MCF 10A (cell line): ENCODE measurements at regions of chr12 and their contacts with region 1.

Region 1: DNA sequence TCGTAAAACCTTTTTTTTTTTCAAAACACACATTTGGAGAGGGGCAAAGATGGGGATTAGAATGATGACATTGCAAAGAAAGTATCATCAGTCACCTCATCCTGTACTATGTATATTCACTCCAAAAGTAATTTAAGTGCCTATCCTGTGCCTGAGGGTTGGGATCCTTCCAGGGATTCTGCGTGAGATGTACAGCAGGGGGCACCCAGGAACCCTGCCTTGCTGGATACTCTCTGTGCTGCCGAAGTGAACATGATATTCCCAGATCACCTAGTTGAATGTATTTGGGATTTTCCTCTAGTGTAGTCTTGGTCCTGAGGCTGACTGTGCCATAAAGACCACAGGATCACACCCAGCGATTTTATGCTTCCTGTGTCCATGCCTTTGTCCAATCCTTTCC is 372.7 kb downstream of the IPO8 start:
- DNase-seq: peak; percentile 8
- H3K4me3 Mint-ChIP-seq: no peak overlapping the region
- H3K27ac Mint-ChIP-seq: no peak overlapping the region
- H3K4me1 Mint-ChIP-seq: no peaks in the 10 kb centered on the region
- H3K27me3 Mint-ChIP-seq: no peaks in the 10 kb centered on the region
- CTCF ChIP-seq: no peak

Region 2: GRCh38 chr12:28963554-28963953 is 1359.5 kb before region 1 on chr12:
- CTCF ChIA-PET with region 1: no interaction called
- POLR2A ChIA-PET with region 1: no interaction called
- intact Hi-C with region 1: no loop called
- DNase-seq: peak; percentile 49
- H3K4me3 Mint-ChIP-seq: no peak overlapping the region
- H3K27ac Mint-ChIP-seq: no peak overlapping the region
- H3K4me1 Mint-ChIP-seq: peaks cover 20% of the 10 kb centered on the region
- H3K27me3 Mint-ChIP-seq: no peaks in the 10 kb centered on the region
- CTCF ChIP-seq: peak; percentile 48

Region 3: DNA sequence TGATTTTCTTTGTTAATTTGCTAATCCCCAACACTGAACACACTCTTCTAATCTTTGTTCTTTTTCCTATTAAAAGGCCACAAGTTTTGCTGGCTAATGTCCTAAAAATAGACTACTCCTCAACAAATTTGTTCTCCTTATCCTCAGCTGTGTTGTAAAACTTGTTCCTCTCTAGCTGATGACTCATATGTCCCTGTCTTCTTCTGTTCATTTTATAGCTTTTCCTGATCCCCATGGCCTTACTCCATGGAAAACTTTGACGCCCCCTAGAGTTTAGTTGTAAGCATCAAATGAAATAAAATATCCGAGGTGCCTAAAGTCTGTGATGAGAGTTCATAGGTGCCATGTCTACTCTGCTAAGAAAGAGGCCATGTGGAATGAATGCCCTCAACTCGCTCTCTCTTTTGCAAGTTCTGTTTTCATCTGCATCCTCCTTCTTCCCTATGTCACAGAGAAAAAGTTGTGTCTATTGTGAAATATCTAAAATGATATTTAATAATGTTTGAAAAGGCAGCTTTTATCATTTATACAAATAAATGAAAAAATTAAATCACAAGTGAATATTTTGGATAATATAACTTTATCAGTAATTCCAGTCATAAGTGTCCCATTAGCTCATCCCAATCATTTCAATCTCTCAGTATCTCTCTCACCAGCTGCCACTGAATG is 134.7 kb after region 1 on chr12:
- CTCF ChIA-PET with region 1: no interaction called
- POLR2A ChIA-PET with region 1: no interaction called
- intact Hi-C with region 1: loop called (anchors 5 kb)
- DNase-seq: peak; percentile 87
- H3K4me3 Mint-ChIP-seq: no peak overlapping the region
- H3K27ac Mint-ChIP-seq: peak overlapping the region; percentile 50
- H3K4me1 Mint-ChIP-seq: peaks cover 12% of the 10 kb centered on the region
- H3K27me3 Mint-ChIP-seq: no peaks in the 10 kb centered on the region
- CTCF ChIP-seq: peak; percentile 37

Region 4: DNA sequence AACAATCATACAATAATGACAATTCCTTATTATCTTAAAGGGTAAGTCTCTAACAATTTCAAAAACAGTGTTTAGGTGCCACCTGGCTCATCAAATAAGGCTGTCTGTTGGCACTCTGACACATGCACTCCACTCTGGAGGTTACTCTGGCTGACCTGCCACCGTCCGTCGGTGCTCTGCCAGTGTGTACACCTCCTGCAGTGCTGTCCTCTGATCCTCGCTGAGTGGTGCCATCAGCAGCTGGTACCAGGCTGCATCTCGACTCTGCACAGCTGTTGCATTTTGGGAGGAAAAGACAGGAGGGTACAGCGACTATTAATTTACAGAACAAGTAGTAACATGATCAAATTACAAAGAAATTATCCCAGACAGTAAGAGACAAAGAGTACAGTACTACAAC is 308.7 kb after region 1 on chr12:
- CTCF ChIA-PET with region 1: no interaction called
- POLR2A ChIA-PET with region 1: no interaction called
- intact Hi-C with region 1: no loop called
- DNase-seq: no peak
- H3K4me3 Mint-ChIP-seq: no peak overlapping the region
- H3K27ac Mint-ChIP-seq: no peak overlapping the region
- H3K4me1 Mint-ChIP-seq: no peaks in the 10 kb centered on the region
- H3K27me3 Mint-ChIP-seq: no peaks in the 10 kb centered on the region
- CTCF ChIP-seq: no peak